PC-9 (cell line): ENCODE measurements at regions of chr2 and their contacts with region 1.

Region 1: DNA sequence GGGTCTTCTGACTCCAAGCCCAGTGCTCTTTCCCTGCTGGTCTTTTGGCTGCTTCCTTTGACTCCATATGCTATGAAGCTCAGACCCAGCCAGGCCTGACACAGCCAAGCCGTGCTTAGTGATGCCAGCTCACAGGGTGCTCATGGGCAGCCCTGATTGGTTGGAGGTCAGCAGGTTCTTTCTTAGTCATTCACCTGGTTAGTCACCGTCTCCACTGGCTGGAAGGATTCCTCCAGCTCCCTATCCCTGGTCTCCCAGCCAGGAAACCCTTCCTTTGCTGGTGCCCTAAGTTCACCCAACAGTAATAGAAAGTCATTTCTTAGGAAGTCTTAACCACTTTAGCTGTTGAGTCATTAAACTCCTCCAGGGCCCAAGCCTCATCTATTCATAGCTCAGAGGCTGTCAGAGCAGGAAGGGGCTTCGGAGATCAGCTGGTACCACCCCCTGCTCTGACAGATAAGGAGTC is 3.9 kb downstream of the KCNK3 start:
- DNase-seq: peak; percentile 56 to 94
- H3K4me3 ChIP-seq: no peak overlapping the region
- H3K27ac ChIP-seq: peak overlapping the region; percentile 61
- H3K4me1 ChIP-seq: peaks cover 18% of the 10 kb centered on the region
- H3K27me3 ChIP-seq: no peaks in the 10 kb centered on the region
- CTCF ChIP-seq: no peak

Region 2: GRCh38 chr2:27461118-27461517 is 764.7 kb after region 1 on chr2:
- CTCF ChIA-PET with region 1: no interaction called
- POLR2A ChIA-PET with region 1: interaction called, 17 read pairs
- intact Hi-C with region 1: no loop called
- DNase-seq: no peak
- H3K4me3 ChIP-seq: no peak overlapping the region
- H3K27ac ChIP-seq: no peak overlapping the region
- H3K4me1 ChIP-seq: no peaks in the 10 kb centered on the region
- H3K27me3 ChIP-seq: no peaks in the 10 kb centered on the region
- CTCF ChIP-seq: no peak